Mammary epithelial cell (primary cell): ENCODE measurements at regions of chr6 and their contacts with region 1.

Region 1: DNA sequence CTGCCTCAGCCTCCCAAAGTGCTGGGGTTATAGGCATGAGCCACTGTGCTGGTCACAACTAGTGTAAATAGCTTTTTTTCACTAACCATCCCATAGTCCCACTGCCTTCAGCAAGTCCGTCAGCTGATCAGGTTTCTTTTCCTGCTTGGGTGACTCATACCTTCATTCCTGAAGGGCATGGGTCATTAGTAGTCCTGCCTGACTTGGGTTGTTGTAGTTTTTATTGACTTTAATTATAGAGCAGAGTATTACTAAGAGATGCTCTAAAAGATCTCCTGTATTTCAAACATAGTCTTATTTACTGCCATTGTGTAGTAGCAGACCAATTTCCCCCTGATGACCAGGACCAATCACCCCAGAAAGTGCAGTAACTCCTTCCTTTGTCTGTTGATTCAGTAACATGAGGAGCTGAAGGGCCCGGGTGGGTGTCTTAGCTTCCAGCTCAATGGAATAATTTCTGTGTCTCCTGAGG is 25.8 kb downstream of the HLA-C start:
- DNase-seq: peak; percentile 95
- H3K4me3 ChIP-seq: no peak overlapping the region
- H3K27ac ChIP-seq: no peak overlapping the region
- H3K4me1 ChIP-seq: peaks cover 18% of the 10 kb centered on the region
- H3K27me3 ChIP-seq: no peaks in the 10 kb centered on the region
- CTCF ChIP-seq: no peak

Region 2: DNA sequence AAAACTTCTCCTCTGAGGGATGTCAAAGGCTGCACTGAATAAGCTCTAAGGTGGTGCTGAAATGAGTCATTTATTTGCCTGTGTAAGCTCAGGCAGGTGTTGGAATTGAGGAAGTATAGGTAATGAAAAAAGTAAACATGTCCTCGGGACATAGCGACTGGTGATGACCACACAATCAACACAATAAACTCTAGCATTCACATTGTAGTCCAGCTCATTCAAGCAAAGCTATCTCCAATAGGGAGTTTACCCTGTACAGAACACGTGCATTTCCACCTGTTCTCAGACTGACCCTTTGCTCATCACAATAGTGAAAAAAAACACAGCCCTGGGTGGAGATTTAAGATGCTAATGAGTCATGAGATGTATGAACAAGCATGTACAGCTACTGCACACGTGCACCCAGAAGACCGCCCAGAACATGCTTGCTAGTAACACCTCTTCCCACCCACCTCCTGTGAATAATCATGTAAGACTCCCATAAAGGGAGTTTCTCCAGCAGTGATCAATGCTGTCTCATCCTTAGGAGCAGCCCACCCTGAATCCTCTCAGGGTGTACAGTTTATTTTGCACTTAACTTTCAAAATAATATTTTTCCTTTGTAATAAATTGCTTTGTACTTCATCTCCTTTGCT is 42.6 kb before region 1 on chr6:
- CTCF ChIA-PET with region 1: no interaction called
- dilution Hi-C with region 1: no loop called
- in situ Hi-C with region 1: no loop called
- intact Hi-C with region 1: loop called (anchors 2 kb)
- DNase-seq: peak; percentile 85
- H3K4me3 ChIP-seq: peak overlapping the region; percentile 45 to 66 (median 49)
- H3K27ac ChIP-seq: peak overlapping the region; percentile 90
- H3K4me1 ChIP-seq: peaks cover 21% of the 10 kb centered on the region
- H3K27me3 ChIP-seq: no peaks in the 10 kb centered on the region
- CTCF ChIP-seq: no peak

Region 3: GRCh38 chr6:31304683-31305082 is 58.6 kb after region 1 on chr6:
- CTCF ChIA-PET with region 1: no interaction called
- dilution Hi-C with region 1: loop called (anchors 5 kb)
- in situ Hi-C with region 1: no loop called
- intact Hi-C with region 1: no loop called
- DNase-seq: no peak
- H3K4me3 ChIP-seq: no peak overlapping the region
- H3K27ac ChIP-seq: no peak overlapping the region
- H3K4me1 ChIP-seq: peaks cover 2% of the 10 kb centered on the region
- H3K27me3 ChIP-seq: peaks cover 13% of the 10 kb centered on the region
- CTCF ChIP-seq: no peak